ENCODE measurements at regions of chr1 and their contacts with region 1.

Region 1: GRCh38 chr1:113042285-113043143 is 30.5 kb upstream of the LRIG2 start:
- DNase-seq: peak; percentile 63
- H3K4me3 ChIP-seq: no peak overlapping the region
- H3K27ac ChIP-seq: peak overlapping the region; percentile 8
- H3K4me1 ChIP-seq: peaks cover 14% of the 10 kb centered on the region
- H3K27me3 ChIP-seq: no peaks in the 10 kb centered on the region
- CTCF ChIP-seq: peak; percentile 74

Region 2: GRCh38 chr1:112735752-112736151 is 306.8 kb before region 1 on chr1:
- intact Hi-C with region 1: loop called (anchors 10 kb)
- DNase-seq: no peak
- H3K4me3 ChIP-seq: no peak overlapping the region
- H3K27ac ChIP-seq: no peak overlapping the region
- H3K4me1 ChIP-seq: no peaks in the 10 kb centered on the region
- H3K27me3 ChIP-seq: peaks cover 62% of the 10 kb centered on the region
- CTCF ChIP-seq: no peak

Region 3: GRCh38 chr1:112882271-112882744 is 160.2 kb before region 1 on chr1:
- intact Hi-C with region 1: loop called (anchors 2 kb)
- DNase-seq: no peak
- H3K4me3 ChIP-seq: no peak overlapping the region
- H3K27ac ChIP-seq: peak overlapping the region; percentile 72
- H3K4me1 ChIP-seq: peaks cover 18% of the 10 kb centered on the region
- H3K27me3 ChIP-seq: no peaks in the 10 kb centered on the region
- CTCF ChIP-seq: no peak

Region 4: GRCh38 chr1:112955781-112956543 is 86.6 kb before region 1 on chr1 and contains the start of gene SLC16A1:
- intact Hi-C with region 1: loop called (anchors 10 kb)
- DNase-seq: peak; percentile 95
- H3K4me3 ChIP-seq: peak within 1 kb of the TSS; percentile 89
- H3K27ac ChIP-seq: peak within 1 kb of the TSS; percentile 98
- H3K4me1 ChIP-seq: peaks cover 95% of the 10 kb centered on the region
- H3K27me3 ChIP-seq: no peaks in the 10 kb centered on the region
- CTCF ChIP-seq: peak; percentile 44
- total RNA-seq, gene SLC16A1: 154 TPM

Region 5: DNA sequence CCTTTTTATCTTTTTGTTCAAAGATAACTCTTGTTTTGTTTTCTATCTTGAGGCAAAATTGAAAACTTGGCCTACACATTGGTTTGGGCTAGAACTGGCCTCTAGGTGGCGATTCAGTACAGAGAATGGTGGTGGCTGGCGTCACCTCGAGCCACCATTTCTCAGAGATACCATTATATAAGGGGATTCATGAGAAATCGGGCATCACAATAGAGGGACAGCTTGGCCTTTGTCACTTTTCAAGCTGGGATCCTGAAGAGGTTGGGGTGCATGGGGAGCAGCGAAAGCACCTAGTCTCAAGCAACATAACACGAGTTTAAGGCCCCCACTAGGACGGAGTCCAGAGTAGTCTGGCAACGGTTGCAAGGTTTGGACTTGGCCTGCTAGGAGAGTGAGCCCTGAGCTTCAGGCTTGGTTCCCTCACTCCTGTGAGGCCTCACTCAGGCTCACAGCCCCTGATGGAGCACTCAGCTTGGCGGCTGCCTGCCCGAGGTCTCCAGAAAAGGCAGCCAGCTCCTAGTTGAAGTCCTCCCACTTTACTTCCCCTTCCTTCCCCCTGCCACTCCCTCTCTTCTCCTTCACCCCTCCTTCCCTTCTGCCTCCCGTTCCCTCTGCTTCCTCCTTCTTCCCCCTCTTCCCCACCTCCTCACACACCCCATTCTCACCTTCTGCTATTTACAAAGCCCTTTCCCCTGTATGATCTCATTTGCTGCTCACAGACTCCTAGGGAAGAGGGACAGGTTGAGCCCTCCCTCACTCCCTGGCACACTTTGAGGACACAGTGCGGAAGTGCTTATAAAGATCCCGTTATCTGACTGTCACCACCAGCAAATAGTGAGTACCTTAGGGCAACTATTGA is 98.3 kb after region 1 on chr1:
- intact Hi-C with region 1: no loop called
- DNase-seq: peak; percentile 40
- H3K4me3 ChIP-seq: peak overlapping the region; percentile 44
- H3K27ac ChIP-seq: peak overlapping the region; percentile 16
- H3K4me1 ChIP-seq: peaks cover 28% of the 10 kb centered on the region
- H3K27me3 ChIP-seq: no peaks in the 10 kb centered on the region
- CTCF ChIP-seq: peak; percentile 88

Measured in left ventricle myocardium inferior (tissue), 1 donor.